ENCODE measurements at regions of chr16 and their contacts with region 1.

Region 1: GRCh38 chr16:54774768-54775167 is 155.9 kb upstream of the IRX5 start:
- DNase-seq: no peak
- ATAC-seq: no peak
- H3K4me3 ChIP-seq: no peak overlapping the region
- H3K27ac ChIP-seq: no peak overlapping the region
- H3K4me1 ChIP-seq: no peaks in the 10 kb centered on the region
- H3K27me3 ChIP-seq: no peaks in the 10 kb centered on the region
- CTCF ChIP-seq: no peak

Region 2: DNA sequence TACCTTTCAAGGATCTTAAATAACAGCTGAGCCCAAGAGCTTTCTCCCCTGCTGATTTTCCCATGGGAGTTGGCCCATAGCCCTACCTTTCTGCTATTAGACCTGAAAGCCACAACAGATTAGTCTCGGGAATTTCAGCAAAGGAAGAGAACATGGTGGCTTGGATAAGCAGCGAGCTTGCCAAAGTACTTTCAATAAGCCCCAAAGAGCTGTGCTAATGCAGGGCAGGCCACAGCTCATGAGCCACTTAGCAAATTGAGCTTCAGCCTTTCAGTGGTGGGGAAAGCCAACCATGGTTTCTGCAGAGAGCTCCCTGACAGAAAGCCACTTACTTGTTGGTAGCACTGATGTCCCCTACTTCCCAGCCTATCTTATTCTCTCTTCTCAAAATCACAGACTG is 61.9 kb before region 1 on chr16:
- intact Hi-C with region 1: loop called in 1 of 10 experiments (anchors 10 kb)
- DNase-seq: no peak
- ATAC-seq: no peak
- H3K4me3 ChIP-seq: no peak overlapping the region
- H3K27ac ChIP-seq: no peak overlapping the region
- H3K4me1 ChIP-seq: no peaks in the 10 kb centered on the region
- H3K27me3 ChIP-seq: no peaks in the 10 kb centered on the region
- CTCF ChIP-seq: no peak

Region 3: DNA sequence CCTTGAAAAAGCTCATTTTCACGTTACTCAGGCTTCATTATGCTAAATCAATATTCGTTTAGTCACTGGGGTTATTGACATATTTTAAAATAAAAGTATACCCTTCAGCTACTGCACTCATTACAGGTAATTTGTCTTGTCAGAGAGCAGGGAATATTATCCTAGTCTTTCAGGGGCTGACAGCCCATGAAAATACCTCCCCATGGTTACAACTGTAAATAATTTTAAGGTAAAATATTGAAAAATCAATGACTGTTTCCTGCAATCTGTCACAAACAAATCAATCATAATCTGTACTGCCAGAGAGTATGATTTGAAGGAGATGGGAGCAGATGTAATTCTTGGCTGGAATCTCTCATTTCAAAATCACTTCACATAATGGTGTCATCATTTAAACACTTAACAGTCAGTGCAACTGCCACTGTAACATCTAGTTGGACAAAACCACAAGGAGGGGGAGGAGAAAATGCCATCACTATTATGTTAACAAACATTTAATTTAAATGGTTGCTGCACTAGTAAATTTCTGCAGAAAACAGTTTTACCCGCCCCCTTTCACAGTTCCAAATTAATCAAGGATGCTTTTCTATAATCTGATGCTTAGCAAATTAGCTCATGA is 146.5 kb after region 1 on chr16:
- intact Hi-C with region 1: no loop called
- DNase-seq: no peak
- ATAC-seq: peak in 1 of 8 donors; percentile 43
- H3K4me3 ChIP-seq: no peak overlapping the region
- H3K27ac ChIP-seq: peak overlapping the region in 7 of 10 donors; percentile 7 to 96 (median 91)
- H3K4me1 ChIP-seq: peaks cover 0 to 20% (median 0%) of the 10 kb centered on the region in 9 donors
- H3K27me3 ChIP-seq: peaks cover 0 to 48% (median 7%) of the 10 kb centered on the region in 7 donors
- CTCF ChIP-seq: no peak